Panc1 (cell line): ENCODE measurements at regions of chr14 and their contacts with region 1.

Region 1: DNA sequence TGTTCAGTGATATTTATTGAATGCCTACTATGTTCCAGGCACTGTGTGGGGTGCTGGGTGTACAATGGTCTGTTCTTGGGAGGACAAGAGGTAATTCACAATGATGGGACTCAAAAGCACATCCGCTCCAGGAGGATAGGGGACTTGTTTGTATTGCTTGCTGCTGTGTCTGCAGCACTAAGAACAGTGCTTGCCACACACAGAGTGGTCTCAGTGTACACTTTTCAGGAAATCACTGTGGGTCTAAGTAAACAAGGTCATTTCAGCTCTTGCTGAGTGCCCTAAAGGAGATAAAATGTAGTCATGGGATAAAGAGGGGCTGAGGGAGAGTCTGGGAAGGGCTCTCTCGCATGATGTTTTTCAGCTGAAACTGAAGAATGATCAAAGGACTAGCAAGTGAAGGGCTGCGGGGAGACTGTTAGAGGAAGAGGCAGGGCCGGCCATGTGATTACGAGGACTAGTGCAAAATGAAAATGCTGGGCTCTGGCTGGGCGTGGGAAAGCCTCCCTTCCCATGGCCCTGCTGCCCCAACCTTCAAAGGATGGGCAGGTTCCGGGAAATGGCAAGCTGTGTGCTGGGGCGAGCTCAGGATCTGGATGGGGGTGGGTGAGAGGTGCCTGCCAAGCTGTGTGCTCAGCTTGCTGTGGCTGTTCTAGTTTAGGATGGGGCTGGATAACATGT is 39.1 kb downstream of the ADCK1 start:
- DNase-seq: no peak
- ATAC-seq: no peak
- H3K4me3 ChIP-seq: no peak overlapping the region
- H3K27ac ChIP-seq: no peak overlapping the region
- H3K4me1 ChIP-seq: no peaks in the 10 kb centered on the region
- H3K27me3 ChIP-seq: no peaks in the 10 kb centered on the region
- CTCF ChIP-seq: no peak

Region 2: GRCh38 chr14:77897374-77897773 is 58.4 kb after region 1 on chr14:
- CTCF ChIA-PET with region 1: no interaction called
- POLR2A ChIA-PET with region 1: interaction called, 10 read pairs
- in situ Hi-C with region 1: no loop called
- intact Hi-C with region 1: no loop called
- DNase-seq: no peak
- ATAC-seq: no peak
- H3K4me3 ChIP-seq: no peak overlapping the region
- H3K27ac ChIP-seq: no peak overlapping the region
- H3K4me1 ChIP-seq: no peaks in the 10 kb centered on the region
- H3K27me3 ChIP-seq: no peaks in the 10 kb centered on the region
- CTCF ChIP-seq: no peak